ENCODE measurements at regions of chr11 and their contacts with region 1.

Region 1: DNA sequence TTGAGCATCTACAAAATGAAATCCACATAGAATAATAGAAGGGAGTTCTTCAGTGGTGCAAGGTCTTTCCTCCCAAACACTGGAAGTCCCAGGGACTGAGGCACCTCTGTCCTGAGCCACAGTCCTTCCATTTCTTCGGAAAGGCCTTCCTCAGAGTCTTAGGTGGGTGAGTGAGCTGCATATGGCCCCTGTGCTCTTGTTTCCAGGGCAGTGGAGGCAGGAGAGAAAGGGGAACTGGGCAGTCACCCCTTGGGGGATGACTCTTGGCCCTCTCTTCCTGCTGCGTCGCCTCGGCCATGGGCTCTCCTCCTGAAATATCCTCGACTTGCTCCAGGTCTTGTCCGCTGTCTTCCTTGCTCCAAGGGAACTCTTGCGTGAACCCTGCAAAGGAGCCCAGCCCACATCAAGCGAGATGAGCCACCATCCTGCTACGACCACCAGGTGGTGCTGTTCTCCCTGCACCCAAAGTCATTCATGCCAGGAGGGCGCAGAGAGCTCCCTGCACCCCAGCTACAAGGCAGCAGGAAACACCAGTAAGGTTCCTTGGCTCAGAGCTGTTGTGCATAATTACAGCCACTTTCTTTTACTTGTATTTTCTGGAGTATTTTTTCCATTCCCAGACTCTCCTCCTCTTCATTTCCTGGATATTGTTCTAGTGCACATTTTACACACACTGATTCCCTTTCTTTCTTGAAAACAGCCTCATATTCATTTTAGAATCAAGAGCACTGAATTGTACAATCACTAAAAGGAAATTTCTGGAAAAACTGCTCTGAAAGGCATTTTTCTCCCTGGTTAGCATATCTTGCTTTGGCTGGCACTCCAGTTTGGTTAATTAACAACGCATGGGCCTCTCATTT is 397.8 kb downstream of the OPCML start:
- DNase-seq: peak; percentile 34
- H3K4me3 ChIP-seq: no peak overlapping the region
- H3K27ac ChIP-seq: no peak overlapping the region
- H3K4me1 ChIP-seq: peaks cover 13% of the 10 kb centered on the region
- H3K27me3 ChIP-seq: peaks cover 16% of the 10 kb centered on the region
- CTCF ChIP-seq: peak; percentile 90

Region 2: DNA sequence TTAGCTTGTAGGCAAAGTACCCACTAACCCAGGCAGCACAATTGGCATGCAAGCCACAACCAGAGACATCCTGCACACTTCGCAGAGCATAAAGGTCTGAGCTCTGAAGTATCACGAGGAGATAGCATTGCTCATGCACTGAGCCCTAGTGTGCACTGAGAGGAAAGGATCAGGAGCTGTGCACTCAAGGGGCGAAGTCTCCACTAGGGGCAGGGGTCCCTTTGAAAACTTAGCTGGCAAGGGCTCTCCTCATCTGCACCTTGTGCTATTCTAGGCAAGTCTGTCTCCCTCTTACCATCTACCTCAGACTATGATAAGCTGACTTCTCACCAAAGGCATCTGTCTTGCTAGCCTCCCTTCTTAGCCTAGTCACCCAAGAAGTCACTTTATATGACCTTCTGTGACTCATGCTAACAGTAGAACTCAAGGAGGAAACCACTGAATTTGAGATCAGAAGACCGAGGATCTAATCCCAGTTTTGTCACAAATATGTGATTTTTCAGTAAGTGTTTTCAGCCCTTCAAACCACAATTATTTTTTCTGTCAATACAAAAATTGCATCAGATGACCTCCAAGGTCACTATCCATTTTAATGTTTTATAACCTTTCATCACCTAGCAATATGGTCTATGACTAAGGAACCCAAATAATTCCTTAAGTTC is 686.1 kb before region 1 on chr11:
- intact Hi-C with region 1: no loop called
- DNase-seq: no peak
- H3K4me3 ChIP-seq: no peak overlapping the region
- H3K27ac ChIP-seq: no peak overlapping the region
- H3K4me1 ChIP-seq: no peaks in the 10 kb centered on the region
- H3K27me3 ChIP-seq: peaks cover 41% of the 10 kb centered on the region
- CTCF ChIP-seq: no peak

Region 3: DNA sequence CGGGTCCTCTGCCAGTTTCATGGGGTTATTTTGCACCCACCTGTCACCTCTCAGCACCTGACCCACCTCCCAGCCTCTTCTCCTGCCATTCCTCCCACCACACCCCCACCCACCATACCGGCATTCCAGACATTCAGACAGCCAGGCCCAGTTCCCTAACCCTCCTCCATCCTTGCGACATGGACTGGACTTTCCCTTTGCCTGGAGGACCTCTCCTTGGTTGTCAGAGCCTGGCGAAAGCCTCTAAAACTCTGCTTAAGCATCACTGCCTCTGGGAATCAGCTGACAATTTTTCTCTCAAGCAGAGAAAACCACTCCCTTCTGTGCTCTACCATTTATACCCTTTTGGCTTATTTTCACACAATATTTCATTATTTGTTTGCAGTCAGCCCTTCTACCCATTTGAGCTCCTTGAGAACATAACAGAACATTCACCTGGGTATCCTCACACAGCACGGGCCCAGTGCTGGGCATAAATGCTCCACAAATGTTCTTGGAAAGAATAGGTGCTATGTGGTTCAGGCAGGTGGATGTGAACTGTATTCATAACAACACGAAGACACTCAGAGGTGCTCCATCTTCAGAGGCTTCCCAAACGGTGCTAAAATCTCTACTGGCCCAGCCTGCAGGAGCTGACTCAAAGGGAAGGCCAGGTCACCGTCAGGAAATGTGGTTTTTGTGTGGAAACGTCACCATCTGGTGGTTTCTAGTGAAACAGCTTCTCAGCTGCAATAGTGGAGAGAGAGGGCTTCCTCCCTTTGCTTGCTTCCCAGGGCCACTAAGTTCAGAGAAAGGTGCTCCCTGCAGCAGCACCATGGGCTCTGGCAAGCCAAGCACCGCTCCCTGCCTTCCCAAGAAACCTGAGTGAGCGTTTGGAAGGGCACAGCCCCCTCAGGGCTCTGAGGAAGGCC is 700.4 kb after region 1 on chr11:
- intact Hi-C with region 1: loop called (anchors 10 kb)
- DNase-seq: no peak
- H3K4me3 ChIP-seq: no peak overlapping the region
- H3K27ac ChIP-seq: no peak overlapping the region
- H3K4me1 ChIP-seq: no peaks in the 10 kb centered on the region
- H3K27me3 ChIP-seq: peaks cover 27% of the 10 kb centered on the region
- CTCF ChIP-seq: peak; percentile 73